PC-3 (cell line): ENCODE measurements at regions of chr5 and their contacts with region 1.

Region 1: DNA sequence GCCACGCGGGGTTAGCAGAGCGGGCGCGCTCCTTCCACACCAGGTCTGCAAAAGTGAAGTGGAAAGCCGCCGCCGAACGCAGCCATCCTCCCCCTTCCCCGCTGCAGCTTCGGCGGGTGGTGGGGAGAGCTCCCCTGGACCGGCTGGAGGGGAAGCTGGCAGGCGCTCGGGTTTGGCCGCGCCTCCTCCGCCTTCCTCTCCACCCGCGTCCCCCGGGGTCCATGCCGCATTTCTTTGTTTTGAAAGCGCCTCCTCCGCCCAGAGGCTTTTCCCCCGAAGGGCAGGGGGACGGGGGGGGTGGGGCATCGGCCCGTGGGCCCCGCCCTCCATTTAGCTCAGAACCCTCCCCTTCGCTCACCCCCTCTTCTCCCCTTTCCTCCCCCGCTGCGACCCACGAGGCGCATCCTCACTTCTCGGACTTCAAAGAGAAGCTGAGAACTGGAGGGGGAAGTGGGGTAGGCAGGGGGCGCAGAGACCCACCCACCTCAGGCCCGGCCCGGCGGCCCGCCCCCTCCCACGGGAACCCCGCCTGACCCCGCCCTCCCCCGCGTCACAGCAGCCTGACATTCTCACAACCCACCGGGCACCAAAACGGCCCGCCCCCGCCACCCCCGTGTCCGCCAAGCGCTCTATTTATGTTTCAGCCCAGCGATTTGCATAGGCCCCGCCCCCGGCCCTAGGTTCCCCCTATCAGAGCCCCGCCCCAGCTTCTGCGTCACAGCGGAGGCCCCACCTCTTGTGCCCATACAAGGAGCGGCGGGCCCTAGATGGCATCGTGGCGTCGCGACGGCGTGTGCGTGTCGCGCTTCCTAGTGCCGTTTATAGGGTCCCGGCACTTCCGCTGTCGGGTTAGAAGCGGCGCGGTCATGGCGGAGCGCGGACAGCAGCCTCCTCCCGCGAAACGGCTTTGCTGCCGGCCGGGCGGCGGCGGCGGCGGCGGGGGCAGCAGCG is at the start of gene ZSWIM6:
- DNase-seq: peak; percentile 93
- ATAC-seq: peak; percentile 60
- H3K4me3 ChIP-seq: peak within 1 kb of the TSS; percentile 95
- H3K27ac ChIP-seq: peak within 1 kb of the TSS; percentile 63
- H3K4me1 ChIP-seq: peaks cover 39% of the 10 kb centered on the region
- H3K27me3 ChIP-seq: no peaks in the 10 kb centered on the region
- CTCF ChIP-seq: no peak
- total RNA-seq, gene ZSWIM6: 3.4 and 4.3 TPM in 2 replicates

Region 2: DNA sequence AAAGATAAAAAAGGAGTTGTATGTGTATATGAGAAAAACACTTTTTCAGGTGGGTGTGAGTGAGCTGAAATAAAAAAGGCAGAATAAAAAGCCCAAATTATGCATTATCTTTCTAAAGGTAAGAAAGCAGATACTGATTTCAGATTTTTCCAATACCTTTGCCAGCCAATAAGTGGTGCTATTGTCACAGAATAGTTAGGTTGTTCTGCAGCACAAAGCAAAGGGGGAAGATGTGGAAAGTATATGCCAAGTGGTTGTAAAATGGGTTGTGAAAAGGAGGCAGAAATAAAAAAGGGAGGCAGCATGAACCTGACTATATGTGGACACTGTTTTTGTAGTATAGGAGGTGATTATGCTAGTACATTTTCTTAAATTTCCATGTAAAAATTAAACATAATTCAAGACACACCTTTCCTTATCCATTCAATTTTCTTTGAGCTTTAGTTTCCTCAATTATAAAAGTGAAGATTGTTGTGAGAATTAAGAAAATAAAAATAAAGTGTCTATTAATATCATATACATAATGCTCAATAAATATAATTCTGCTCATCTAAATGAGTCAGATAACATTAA is 276.2 kb before region 1 on chr5:
- CTCF ChIA-PET with region 1: no interaction called
- POLR2A ChIA-PET with region 1: interaction called, 3 read pairs
- intact Hi-C with region 1: loop called (anchors 2 kb)
- DNase-seq: peak; percentile 53
- ATAC-seq: peak; percentile 29; the same call in 1 of the 2 replicates
- H3K4me3 ChIP-seq: no peak overlapping the region
- H3K27ac ChIP-seq: no peak overlapping the region
- H3K4me1 ChIP-seq: peaks cover 36% of the 10 kb centered on the region
- H3K27me3 ChIP-seq: no peaks in the 10 kb centered on the region
- CTCF ChIP-seq: peak; percentile 73

Region 3: DNA sequence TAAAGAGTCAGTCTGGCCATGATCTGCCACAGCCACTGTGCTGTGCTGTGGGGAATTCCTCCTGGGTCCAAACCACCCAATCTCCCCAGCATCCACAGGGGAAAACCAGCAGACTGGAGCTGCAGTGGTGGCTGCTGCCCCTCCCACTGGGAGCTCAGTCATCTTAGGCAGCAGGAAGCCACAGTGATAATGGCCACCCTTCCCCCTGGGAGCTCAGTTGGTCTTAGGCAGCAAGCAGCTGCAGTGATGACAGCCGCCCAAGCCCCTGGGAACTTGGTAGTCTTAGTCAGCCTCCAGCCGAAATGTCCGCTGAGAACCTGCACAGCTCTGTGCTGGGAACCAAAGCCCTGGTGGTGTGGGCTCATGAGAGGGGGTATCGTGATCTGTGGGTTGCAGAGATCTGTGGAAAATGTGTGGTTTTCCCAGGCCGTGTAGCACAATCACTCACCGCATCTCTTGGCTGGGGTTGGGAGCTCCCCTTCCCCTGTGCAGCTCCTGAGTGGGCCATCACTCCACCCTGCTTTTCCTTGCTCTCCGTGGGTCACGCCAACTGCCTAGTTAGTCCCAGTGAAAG is 131.0 kb before region 1 on chr5:
- CTCF ChIA-PET with region 1: no interaction called
- POLR2A ChIA-PET with region 1: no interaction called
- intact Hi-C with region 1: no loop called
- DNase-seq: no peak
- ATAC-seq: no peak
- H3K4me3 ChIP-seq: no peak overlapping the region
- H3K27ac ChIP-seq: no peak overlapping the region
- H3K4me1 ChIP-seq: no peaks in the 10 kb centered on the region
- H3K27me3 ChIP-seq: no peaks in the 10 kb centered on the region
- CTCF ChIP-seq: no peak

Region 4: DNA sequence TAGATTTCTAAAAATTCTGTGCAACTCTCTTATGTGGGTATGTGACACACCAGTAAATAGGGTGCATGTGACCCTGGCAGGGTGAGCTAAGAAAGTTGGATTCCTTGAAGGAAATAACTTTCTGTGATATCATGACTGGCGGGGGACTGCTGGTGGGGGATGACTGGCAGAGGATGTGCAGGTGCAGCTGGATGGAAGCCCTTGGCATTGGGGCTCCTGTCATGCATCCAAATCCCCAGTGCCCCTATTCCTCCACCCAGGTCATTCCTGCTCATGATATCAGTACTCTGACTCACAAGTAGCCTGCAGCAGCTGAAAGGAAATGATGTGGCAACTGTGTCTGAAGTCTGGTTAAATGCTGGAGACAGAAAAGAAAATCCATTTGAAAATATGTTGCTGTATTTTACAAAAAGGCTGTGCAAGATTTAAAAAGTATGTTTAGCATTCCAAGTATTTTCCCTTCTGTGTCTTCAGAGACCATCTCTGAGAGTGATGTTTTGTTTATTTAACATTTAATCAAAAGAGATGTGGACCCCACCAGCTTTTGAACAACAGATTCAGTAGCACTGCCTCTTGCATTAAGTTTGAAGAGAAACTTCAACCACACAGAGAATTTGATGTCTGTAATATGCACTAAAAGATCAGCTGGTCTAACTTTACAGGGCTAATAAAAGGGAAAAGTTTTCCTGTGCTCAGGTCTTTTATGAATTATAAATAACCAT is 17.6 kb before region 1 on chr5:
- CTCF ChIA-PET with region 1: interaction called, 3 read pairs
- POLR2A ChIA-PET with region 1: interaction called, 6 read pairs
- intact Hi-C with region 1: loop called (anchors 2 kb)
- DNase-seq: peak; percentile 87
- ATAC-seq: peak; percentile 65
- H3K4me3 ChIP-seq: peak overlapping the region; percentile 35; the same call in 1 of the 2 replicates
- H3K27ac ChIP-seq: peak overlapping the region; percentile 91
- H3K4me1 ChIP-seq: peaks cover 46% of the 10 kb centered on the region
- H3K27me3 ChIP-seq: no peaks in the 10 kb centered on the region
- CTCF ChIP-seq: no peak

Region 5: DNA sequence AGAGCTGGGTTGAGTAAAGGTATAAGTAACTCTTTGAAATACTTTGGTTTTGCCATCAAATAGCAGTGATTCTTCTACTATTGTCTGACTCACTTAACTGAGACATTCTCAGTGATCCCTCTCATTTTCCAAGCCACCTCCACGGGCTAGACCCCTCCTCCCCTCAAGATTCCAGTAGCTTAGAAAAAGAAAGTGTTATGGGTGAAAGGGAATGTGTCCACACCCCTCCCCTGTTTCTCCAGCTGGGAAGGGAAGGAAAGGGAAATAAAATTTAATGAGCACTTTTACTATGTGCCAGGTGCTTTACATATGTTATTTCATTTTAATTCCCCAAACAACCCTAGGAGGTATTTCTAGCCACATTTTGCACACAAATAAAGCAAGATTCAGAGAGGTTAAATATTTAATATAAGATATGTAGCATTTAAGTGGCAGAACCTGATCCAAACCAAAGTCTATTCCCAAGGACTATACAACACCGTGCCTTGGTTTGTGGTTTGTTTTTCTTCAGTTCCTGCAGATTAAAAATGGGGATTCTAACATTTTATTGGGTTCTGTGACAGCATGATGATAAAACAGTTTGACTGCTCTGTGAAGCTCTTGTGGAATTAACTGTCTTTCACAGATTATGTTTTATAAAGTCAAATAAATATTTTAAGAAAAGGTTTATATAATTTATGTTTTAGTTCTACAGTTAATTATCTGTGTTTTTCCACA is 136.2 kb after region 1 on chr5:
- CTCF ChIA-PET with region 1: no interaction called
- POLR2A ChIA-PET with region 1: no interaction called
- intact Hi-C with region 1: loop called (anchors 10 kb)
- DNase-seq: peak; percentile 43
- ATAC-seq: peak; percentile 80
- H3K4me3 ChIP-seq: no peak overlapping the region
- H3K27ac ChIP-seq: no peak overlapping the region
- H3K4me1 ChIP-seq: peaks cover 13% of the 10 kb centered on the region
- H3K27me3 ChIP-seq: no peaks in the 10 kb centered on the region
- CTCF ChIP-seq: no peak

Region 6: DNA sequence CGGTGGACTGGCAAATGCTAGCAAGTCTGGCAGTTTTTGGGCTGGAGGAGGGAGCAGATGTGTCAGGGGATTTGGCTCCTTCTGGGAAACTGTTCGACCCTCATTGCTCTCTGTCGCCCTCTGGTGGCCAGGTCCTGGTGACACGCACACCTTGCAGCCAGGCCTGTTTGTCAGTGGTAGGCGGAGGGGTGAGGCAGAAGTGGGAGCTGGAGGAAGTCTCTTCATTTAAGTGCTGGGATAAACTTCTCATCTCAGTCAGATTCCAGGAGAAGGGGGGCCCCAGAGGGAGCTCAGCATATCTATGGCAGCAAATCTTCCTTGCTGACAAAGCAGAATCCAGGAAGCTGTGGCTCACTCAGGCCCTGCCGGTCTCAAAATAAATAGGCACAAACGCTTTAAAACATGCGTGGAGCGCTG is 326.9 kb after region 1 on chr5:
- CTCF ChIA-PET with region 1: no interaction called
- POLR2A ChIA-PET with region 1: no interaction called
- intact Hi-C with region 1: loop called (anchors 2 kb)
- DNase-seq: peak; percentile 76
- ATAC-seq: peak; percentile 81
- H3K4me3 ChIP-seq: no peak overlapping the region
- H3K27ac ChIP-seq: no peak overlapping the region
- H3K4me1 ChIP-seq: no peaks in the 10 kb centered on the region
- H3K27me3 ChIP-seq: no peaks in the 10 kb centered on the region
- CTCF ChIP-seq: peak; percentile 81